ENCODE measurements at regions of chr11 and their contacts with region 1.

Region 1: DNA sequence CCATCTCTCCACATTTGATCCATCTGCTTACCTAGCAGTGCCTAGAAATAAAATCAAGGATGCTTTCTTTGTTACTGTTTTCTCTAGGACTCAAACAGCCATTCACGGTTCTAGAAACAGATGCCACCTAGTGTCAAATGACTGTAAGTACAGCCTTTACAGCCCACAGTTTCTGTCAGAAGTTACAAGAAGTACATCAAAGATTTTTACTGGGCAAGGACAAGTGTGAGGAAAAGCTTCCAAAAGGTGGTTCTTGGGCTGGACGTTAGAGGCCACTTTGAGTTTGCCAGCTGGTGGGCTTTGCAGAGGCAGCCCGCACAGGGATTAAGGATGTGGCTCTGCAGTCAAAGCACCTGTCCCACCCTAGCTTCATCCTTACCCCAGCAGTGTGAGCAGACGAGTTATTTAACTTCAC is 6.9 kb downstream of the KMT5B start:
- DNase-seq: no peak
- ATAC-seq: peak; percentile 42 to 75 (median 62)
- H3K4me3 ChIP-seq: no peak overlapping the region
- H3K27ac ChIP-seq: no peak overlapping the region
- H3K4me1 ChIP-seq: peaks cover 73% of the 10 kb centered on the region
- H3K27me3 ChIP-seq: no peaks in the 10 kb centered on the region
- CTCF ChIP-seq: peak; percentile 79

Region 2: DNA sequence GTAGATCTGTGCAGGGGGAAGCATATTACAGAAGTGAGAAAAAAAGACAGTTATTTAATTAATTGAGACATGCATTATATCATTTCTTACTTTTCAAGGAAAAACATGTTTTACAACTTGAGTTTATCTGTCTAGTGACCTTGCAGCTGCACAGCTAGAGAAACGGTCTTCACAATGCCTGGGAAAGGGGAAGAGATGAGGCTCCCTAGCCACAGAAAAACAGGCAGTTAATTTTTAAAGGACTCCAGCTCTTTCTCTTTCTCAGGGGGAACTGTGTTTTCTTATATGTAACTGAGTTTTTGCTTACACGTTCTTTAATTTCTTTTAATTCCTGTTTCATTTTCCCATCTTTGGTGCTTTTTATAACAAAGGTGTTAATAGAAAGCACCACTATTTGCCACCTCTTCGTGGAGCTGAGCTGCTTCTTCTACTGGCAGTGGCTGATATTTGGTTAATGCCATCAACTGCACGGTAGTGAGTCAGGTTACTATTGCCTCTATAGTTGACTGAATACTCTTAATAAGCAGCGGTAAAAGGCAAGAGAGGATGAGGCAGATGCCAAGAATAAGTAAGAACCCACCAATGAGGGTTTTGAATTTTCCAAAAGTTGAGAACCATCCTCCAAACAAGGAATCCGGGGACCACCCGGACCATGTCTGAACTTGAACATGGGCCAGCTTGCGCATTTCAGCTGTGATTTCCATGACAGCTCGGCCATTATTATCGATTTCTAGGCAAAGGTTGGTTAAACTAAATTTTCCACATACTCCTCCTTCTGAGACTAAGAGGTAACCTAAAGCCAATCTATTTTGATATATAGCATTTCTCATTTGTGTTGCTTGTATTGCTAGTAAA is 520.3 kb before region 1 on chr11:
- intact Hi-C with region 1: no loop called
- DNase-seq: no peak
- ATAC-seq: no peak
- H3K4me3 ChIP-seq: no peak overlapping the region
- H3K27ac ChIP-seq: no peak overlapping the region
- H3K4me1 ChIP-seq: no peaks in the 10 kb centered on the region
- H3K27me3 ChIP-seq: peaks cover 0 to 18% (median 0%) of the 10 kb centered on the region in 3 donors
- CTCF ChIP-seq: no peak

Region 3: DNA sequence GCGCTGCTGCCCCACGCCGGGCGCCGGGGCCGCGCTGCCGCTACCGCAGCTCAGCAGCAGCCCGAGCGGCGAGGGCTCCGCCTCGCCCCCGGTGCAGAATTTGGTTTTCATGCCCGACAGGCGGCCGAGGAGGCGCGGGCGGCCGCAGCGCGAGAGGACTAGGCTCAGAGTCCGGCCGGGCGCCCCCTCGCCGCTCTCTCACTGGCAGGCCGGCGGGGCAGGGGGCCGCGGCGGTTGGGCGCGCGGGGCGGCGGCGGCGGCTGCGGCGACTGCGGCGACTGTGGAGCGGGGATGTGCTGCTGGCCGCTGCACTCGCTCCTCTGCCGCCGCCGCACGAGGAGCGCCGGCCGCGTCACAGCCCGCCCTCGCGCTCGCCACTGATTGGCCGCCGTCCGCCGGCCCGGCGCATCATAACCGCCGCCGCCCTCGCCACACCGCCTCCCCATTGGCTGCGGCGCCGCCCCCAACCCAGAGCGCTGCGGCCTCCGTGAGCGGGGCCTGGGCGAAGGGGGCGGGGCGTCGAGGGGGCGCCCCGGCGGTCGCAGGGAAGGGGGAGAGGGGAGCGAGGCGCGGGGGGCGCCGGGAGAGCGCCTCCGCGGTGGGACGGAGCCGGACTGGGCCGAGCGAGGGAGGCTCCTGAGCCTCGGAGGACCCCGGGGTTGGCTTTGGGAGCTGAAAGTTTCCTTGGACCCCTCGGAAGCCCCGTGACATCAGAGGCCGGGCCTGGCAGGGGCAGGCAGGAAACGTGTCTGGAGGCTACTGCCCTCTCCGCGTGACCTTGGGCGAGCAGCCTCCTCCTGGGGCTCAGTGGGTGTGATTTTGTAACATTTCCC is 84.9 kb before region 1 on chr11 and contains the start of gene CHKA:
- intact Hi-C with region 1: loop called in 1 of 2 experiments (anchors 5 kb)
- DNase-seq: peak; percentile 95 to 97
- ATAC-seq: peak; percentile 95 to 97 (median 96)
- H3K4me3 ChIP-seq: peak within 1 kb of the TSS; percentile 81
- H3K27ac ChIP-seq: peak within 1 kb of the TSS; percentile 99
- H3K4me1 ChIP-seq: peaks cover 28% of the 10 kb centered on the region
- H3K27me3 ChIP-seq: no peaks in the 10 kb centered on the region
- CTCF ChIP-seq: no peak
- total RNA-seq, gene CHKA: 3.6 to 6.9 (median 5.6) TPM

Region 4: DNA sequence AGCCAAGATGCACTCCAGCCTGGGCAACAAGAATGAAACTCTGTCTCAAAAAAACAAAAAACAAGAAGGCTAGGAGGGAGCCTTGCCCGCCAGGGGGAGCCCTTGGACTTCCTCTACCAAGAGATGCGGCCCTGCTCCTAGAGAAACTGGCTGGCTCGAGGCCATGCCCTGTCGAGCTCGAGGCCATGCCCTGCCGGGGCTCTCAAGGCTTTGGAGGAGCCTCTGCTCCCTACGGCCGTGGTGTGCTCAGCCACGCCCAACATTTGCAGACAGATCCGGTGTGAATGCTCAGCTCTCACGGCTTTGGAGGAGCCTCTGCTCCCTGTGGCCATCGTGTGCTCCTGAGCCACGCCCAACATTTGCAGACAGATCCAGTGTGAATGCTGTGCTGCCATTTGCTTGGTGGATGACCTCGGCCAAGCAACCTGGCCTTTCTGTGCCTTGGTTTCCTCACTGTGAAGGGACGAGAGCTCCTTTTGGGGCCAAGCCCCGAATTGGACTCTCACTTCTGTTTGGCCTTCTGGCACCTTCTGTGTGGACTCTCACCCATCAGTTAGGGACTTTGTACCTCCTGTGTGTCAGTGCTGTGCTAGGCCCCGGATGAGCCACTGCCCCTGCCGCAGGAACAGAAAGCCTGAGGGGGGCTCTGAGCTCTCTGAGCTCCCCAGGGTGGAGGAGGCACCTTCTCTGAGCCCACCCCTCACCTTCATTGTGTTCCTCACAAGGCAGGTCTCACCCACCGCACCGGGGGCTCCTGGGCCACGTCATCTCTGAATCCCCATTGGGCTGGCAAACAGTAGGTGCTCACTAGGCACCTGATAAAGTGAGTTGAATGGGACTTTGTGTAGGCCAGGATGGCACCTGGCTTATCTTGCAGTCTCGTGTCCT is 51.5 kb after region 1 on chr11:
- intact Hi-C with region 1: no loop called
- DNase-seq: peak; percentile 96 to 98
- ATAC-seq: peak; percentile 83 to 95 (median 91)
- H3K4me3 ChIP-seq: peak overlapping the region; percentile 40
- H3K27ac ChIP-seq: no peak overlapping the region
- H3K4me1 ChIP-seq: peaks cover 4% of the 10 kb centered on the region
- H3K27me3 ChIP-seq: no peaks in the 10 kb centered on the region
- CTCF ChIP-seq: peak; percentile 89

Region 5: DNA sequence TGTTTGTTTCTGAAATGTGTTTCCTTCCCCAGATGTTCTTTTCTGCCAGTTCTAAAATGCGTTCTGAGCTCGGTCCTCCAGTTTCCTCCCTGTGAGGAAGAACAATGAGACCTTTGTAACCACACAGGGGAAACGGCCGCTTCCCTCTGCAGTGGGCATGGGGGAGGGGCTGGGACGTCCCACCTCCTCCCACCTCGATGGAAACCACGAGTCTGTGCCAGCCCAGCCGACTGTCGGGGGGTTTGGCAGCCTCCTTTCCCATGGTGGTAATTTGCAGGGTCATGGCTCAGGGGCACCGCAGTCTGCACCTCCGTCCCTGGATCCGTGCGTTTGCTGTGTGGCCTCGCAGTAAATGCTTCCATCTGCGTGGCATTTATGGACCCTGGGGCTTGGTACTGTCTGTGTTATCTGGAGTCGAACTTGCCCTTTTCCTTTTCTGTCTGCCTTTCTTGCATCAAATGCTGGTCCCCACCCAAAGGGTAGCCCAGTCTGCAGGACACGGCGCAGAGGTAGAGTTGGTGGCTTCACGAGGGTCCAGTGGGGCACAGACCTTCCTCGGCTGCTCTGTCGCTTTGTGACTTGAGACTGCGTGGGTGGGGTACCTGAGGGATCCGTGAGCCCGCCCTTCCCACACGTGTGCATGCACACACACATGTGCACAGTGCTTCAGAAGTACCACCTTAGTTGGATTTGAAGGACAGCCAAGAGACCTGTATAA is 122.3 kb after region 1 on chr11:
- intact Hi-C with region 1: no loop called
- DNase-seq: no peak
- ATAC-seq: peak in 1 of 4 donors; percentile 8
- H3K4me3 ChIP-seq: no peak overlapping the region
- H3K27ac ChIP-seq: no peak overlapping the region
- H3K4me1 ChIP-seq: peaks cover 35% of the 10 kb centered on the region
- H3K27me3 ChIP-seq: no peaks in the 10 kb centered on the region
- CTCF ChIP-seq: no peak

Measured in psoas muscle (tissue), 8 donors.